A673 (cell line): ENCODE measurements at regions of chr10 and their contacts with region 1.

Region 1: GRCh38 chr10:31836569-31837406 is 91.8 kb downstream of the ARHGAP12 start:
- DNase-seq: peak; percentile 47
- H3K4me3 ChIP-seq: no peak overlapping the region
- H3K27ac ChIP-seq: no peak overlapping the region
- H3K4me1 ChIP-seq: peaks cover 20% of the 10 kb centered on the region
- H3K27me3 ChIP-seq: no peaks in the 10 kb centered on the region
- CTCF ChIP-seq: peak; percentile 69

Region 2: DNA sequence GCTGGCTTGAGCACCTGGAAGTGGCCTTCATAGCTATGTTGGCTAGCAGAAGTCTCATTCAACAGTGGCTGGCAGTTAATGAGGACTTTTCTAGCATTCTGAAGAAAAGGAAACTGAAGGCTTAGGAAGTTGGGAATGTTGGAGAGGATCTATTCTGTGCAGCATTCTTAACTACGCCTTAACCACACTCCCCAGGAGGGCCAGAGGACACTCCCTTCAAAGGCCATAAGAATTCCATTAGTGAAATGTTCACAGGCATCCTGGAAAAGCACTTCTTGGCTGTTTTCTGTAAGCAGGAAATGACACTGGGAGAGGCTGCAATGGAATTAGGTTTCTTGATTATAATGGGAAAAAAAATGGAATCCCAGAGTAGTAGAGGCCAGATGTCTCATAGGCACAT is 97.1 kb before region 1 on chr10:
- CTCF ChIA-PET with region 1: no interaction called
- POLR2A ChIA-PET with region 1: no interaction called
- intact Hi-C with region 1: no loop called
- DNase-seq: peak; percentile 31
- H3K4me3 ChIP-seq: no peak overlapping the region
- H3K27ac ChIP-seq: no peak overlapping the region
- H3K4me1 ChIP-seq: no peaks in the 10 kb centered on the region
- H3K27me3 ChIP-seq: no peaks in the 10 kb centered on the region
- CTCF ChIP-seq: no peak

Region 3: DNA sequence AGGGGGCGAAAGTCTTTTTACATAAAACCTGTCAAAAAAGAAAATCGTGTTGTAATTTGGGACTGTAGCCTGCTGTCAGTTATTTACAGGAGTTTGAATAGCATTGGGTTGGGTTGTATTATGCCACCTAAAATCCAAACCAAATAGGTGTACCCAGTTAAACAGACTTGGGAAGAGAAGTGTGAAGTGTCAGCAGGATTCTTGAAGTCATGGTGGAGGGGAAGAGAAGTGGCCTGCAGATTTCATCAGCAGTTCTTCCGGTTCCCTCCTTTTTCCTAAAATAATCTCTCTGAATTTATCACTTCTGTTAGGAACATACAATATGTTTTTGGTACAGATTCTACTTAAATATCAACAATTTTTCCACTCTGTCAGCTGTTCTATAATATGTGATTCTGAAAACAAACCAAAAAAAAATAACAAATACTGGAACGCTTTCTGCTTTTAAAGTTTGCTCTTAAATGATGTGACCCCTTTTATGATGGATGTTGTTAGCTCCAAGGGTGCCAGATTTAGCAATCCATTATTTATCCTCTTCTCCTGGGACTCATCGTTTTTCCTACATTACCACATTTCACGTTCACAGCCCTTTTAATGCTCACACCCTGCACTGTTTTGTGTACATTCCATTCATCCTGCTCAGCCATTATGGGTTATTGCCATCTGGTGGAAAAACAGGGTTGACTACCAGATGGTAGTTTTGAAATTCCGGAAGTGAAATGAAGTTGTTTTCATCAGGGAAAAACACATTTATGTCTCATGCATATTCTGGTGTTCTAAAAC is 110.5 kb after region 1 on chr10:
- CTCF ChIA-PET with region 1: no interaction called
- POLR2A ChIA-PET with region 1: no interaction called
- intact Hi-C with region 1: loop called (anchors 10 kb)
- DNase-seq: peak; percentile 87
- H3K4me3 ChIP-seq: no peak overlapping the region
- H3K27ac ChIP-seq: peak overlapping the region; percentile 14
- H3K4me1 ChIP-seq: peaks cover 38% of the 10 kb centered on the region
- H3K27me3 ChIP-seq: no peaks in the 10 kb centered on the region
- CTCF ChIP-seq: peak; percentile 73

Region 4: DNA sequence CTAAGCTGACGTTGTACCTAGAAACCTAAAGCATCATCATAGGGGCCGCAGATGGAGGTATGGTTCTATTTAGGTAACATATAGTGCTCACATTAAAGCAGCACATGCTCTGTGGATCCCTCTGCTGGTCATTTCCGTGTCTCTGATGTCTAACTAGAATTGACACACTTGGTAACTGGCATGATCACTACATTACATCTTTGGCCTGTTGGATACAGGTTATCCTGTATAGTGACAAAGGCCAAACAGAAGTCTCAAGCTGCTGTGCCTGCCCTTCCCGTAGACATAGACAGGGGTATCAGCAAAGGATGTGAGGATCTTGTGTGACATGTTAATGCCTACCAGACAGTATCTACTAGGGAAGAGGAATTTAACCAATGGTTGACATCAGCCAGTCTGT is 168.3 kb after region 1 on chr10:
- CTCF ChIA-PET with region 1: interaction called, 3 read pairs
- POLR2A ChIA-PET with region 1: no interaction called
- intact Hi-C with region 1: loop called (anchors 10 kb)
- DNase-seq: peak; percentile 61
- H3K4me3 ChIP-seq: no peak overlapping the region
- H3K27ac ChIP-seq: no peak overlapping the region
- H3K4me1 ChIP-seq: no peaks in the 10 kb centered on the region
- H3K27me3 ChIP-seq: no peaks in the 10 kb centered on the region
- CTCF ChIP-seq: peak; percentile 73

Region 5: GRCh38 chr10:32207544-32207943 is 370.8 kb after region 1 on chr10:
- CTCF ChIA-PET with region 1: no interaction called
- POLR2A ChIA-PET with region 1: no interaction called
- intact Hi-C with region 1: loop called (anchors 10 kb)
- DNase-seq: peak; percentile 75
- H3K4me3 ChIP-seq: no peak overlapping the region
- H3K27ac ChIP-seq: no peak overlapping the region
- H3K4me1 ChIP-seq: no peaks in the 10 kb centered on the region
- H3K27me3 ChIP-seq: no peaks in the 10 kb centered on the region
- CTCF ChIP-seq: peak; percentile 69